PC-9 (cell line): ENCODE measurements at regions of chr6 and their contacts with region 1.

Region 1: GRCh38 chr6:13574149-13574570 is 241 bp upstream of the SIRT5 start:
- DNase-seq: peak; percentile 80 to 96
- H3K4me3 ChIP-seq: peak overlapping the region; percentile 92
- H3K27ac ChIP-seq: peak overlapping the region; percentile 96
- H3K4me1 ChIP-seq: peaks cover 17% of the 10 kb centered on the region
- H3K27me3 ChIP-seq: no peaks in the 10 kb centered on the region
- CTCF ChIP-seq: peak; percentile 52

Region 2: DNA sequence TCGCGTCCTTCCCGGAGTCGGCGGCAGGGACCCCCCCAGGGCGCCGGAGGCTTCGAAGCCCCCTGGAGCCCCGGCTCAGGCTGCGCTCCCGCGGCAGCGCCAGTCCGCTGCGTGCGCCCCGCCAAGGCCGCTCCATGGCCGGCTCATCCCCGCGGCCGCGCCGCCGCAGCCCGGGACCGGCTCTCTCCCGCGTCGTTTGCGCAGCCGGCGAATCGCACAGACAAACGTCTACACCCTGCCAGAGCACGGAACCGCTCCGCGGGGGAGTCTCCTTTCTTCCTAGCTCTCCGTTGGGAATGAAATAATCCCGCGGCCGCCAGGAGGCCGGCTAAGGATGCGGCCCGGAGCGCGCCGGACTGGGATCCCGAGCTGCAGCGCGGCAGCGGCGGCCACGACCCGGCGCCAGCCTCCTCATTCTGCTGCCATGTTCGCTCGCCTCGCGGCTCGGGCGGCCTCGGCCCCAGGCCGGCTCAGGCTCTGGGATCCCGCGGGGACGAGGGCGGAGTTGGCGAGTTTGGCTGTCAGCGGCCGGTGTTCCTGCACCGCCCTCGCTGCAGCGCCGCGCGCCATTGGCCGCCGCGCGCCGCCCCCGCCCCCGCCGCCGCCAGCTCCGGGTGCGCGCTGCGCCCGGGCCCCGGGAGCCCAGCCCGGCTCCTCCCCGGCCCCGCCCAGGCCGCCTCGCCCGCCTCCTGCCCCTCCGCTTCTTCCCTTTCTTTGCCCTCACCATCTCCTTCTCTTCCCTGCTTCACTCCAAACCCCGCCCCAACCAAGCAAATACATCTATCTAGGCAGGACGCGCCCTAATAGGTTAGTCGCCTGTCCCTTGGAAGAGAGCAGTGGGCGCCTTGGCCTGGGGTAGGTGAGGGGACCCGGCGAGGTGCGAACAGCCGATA is 86.8 kb before region 1 on chr6 and contains the start of gene GFOD1:
- CTCF ChIA-PET with region 1: no interaction called
- POLR2A ChIA-PET with region 1: interaction called, 3 read pairs
- intact Hi-C with region 1: loop called (anchors 5 kb)
- DNase-seq: peak; percentile 46 to 84
- H3K4me3 ChIP-seq: peak within 1 kb of the TSS; percentile 68
- H3K27ac ChIP-seq: no peak within 1 kb of the TSS
- H3K4me1 ChIP-seq: 0 out of 2 replicates have a peak, but pooled peaks cover 9% of the 10 kb centered on the region
- H3K27me3 ChIP-seq: no peaks in the 10 kb centered on the region
- CTCF ChIP-seq: no peak
- total RNA-seq, gene GFOD1: 0.68 and 1.2 TPM in 2 replicates

Region 3: GRCh38 chr6:13678255-13678983 is 104.3 kb after region 1 on chr6:
- CTCF ChIA-PET with region 1: no interaction called
- POLR2A ChIA-PET with region 1: no interaction called
- intact Hi-C with region 1: no loop called
- DNase-seq: no peak
- H3K4me3 ChIP-seq: no peak overlapping the region
- H3K27ac ChIP-seq: no peak overlapping the region
- H3K4me1 ChIP-seq: no peaks in the 10 kb centered on the region
- H3K27me3 ChIP-seq: no peaks in the 10 kb centered on the region
- CTCF ChIP-seq: no peak

Region 4: GRCh38 chr6:13803581-13803980 is 229.4 kb after region 1 on chr6:
- CTCF ChIA-PET with region 1: no interaction called
- POLR2A ChIA-PET with region 1: no interaction called
- intact Hi-C with region 1: no loop called
- DNase-seq: no peak
- H3K4me3 ChIP-seq: no peak overlapping the region
- H3K27ac ChIP-seq: no peak overlapping the region
- H3K4me1 ChIP-seq: no peaks in the 10 kb centered on the region
- H3K27me3 ChIP-seq: no peaks in the 10 kb centered on the region
- CTCF ChIP-seq: no peak